Right ventricle myocardium superior (tissue), 1 donor: ENCODE measurements at regions of chr1 and their contacts with region 1.

Region 1: DNA sequence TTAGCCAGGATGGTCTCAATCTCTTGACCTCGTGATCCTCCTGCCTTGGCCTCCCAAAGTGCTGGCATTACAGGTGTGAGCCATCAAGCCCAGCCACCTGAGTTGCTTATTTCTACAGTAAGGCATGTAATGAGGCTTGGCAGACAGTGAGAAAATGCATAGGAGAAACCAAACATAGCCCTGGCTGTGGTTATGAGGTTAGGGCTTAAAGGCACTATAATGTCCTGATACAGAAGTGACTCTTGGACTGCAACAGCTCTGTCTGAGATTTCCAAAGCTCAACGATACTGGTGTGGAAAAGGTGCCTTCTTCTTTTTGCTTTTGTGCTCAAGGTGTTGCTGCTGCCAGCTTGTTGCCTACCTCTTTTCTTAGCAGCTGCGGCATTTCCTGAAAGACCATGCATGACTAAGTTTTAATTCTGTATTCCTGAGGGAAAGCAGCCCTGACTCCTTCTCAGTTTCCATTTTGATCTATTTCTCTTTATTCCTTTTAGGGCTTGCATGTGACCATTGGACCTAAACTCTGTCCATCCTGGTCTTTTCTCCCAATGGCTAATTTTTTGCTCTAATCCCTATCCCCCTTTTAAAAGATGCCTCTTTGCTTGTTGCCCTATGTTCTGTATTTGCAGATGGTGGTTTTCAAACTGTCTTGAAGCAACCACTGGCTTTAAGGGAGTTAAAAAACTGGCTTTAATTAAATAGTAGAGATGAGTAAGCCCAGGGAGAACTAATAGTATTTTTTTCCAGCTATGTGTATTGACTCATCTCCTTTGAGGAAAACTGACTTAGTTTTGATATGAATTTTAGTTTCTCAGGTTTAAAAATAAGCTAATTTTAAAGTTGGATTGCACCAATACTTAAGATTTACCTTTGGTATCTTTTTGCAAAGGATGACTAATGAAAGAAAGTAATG is 70.3 kb downstream of the KIF1B start:
- DNase-seq: no peak
- ATAC-seq: no peak

Region 2: DNA sequence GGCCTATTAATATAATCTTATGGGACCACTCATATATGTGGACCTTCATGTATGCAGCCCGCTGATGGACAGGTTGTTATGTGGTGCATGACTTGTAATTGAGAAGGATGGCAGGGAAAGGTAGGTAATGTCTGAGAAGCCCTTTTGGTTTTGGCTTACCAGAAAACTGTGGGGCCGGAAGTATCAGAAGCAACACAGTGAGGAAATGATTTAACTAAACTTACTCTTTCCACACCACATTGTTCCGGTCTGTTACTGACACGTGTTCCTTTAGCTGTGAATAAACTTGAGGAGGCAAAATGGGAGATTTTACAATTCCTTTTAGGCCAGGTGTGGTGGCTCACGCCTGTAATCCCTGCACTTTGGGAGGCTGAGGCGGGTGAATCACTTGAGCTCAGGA is 37.9 kb before region 1 on chr1:
- intact Hi-C with region 1: loop called (anchors 2 kb)
- DNase-seq: no peak
- ATAC-seq: no peak